ENCODE measurements at regions of chr3 and their contacts with region 1.

Region 1: GRCh38 chr3:158094235-158095110 is 11.7 kb downstream of the SHOX2 start:
- DNase-seq: no peak
- ATAC-seq: no peak
- H3K4me3 ChIP-seq: no peak overlapping the region
- H3K27ac ChIP-seq: no peak overlapping the region
- H3K4me1 ChIP-seq: no peaks in the 10 kb centered on the region
- H3K27me3 ChIP-seq: no peaks in the 10 kb centered on the region
- CTCF ChIP-seq: no peak
- EP300 ChIP-seq: no peak
- POLR2A ChIP-seq: no peak
- RAD21 ChIP-seq: no peak

Region 2: DNA sequence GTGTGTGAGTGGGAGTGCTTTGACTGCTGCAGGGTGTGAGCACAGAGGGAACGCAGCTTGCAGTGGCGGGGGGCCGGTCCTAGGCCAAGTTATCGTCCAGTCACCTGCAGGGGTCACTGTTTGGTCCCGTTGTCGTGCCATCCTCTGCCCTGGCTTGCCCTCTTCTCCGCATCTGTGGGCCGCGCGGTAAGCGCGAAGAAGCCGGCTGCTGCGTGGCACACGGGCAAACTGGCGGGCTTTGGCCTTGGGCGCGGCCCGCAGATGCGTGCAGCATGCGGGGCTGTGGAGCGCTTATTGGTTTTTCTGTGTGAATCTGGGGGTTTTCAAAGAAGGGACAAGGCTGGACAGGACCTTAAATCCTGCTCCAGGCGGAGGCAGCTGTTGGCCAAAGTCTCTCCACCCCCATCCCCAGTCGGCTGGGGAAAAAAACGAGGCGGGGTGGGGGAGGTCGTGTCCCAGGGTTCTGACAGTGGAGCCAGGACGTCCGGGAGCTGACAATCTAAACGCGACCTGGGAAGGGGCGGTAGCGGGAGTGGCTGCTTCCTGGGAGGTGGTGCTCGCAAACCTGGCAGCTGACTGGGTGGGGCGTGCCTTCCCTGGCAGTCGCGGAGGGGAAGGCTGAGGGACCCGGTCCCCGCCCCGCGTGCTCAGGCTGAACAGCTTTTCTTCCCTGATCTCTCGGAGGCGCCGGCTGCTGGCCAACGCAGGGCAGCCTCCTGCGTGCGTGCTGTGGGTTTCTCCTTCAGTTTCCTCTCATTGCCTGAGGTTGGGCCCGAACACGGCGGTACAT is 551.6 kb before region 1 on chr3:
- CTCF ChIA-PET with region 1: no interaction called
- POLR2A ChIA-PET with region 1: no interaction called
- in situ Hi-C with region 1: no loop called
- intact Hi-C with region 1: no loop called
- DNase-seq: no peak
- ATAC-seq: no peak
- H3K4me3 ChIP-seq: no peak overlapping the region
- H3K27ac ChIP-seq: no peak overlapping the region
- H3K4me1 ChIP-seq: no peaks in the 10 kb centered on the region; a peak in 2 of 5 replicates
- H3K27me3 ChIP-seq: no peaks in the 10 kb centered on the region
- CTCF ChIP-seq: no peak
- EP300 ChIP-seq: no peak
- POLR2A ChIP-seq: no peak
- RAD21 ChIP-seq: no peak

Region 3: DNA sequence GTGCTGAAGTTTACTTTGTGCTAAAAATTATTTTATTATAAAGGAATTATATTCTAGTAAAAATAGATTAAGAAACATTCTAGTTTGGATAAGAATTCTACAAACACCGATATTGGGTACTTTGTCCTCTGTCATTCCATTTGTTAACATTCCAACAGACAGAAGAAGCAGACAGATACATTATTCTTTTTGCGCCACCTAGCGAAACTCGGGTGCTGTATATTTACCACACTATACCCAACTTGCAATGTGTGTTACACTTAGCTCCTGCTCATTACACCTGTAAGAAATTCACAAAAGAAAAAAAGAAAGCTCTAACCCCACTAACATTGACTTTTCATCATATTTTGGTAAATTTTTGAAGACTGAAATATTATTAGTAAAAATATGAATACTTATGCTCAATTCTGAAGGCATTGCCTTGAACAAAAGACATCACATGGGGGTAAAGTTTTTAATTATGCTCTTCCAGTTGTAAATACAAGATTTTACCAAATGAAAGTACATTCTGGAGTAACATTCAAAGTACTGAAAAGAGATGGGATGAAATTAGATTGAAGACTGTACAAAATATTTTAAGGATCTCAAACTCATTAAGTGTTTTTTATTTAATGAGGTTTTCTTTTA is 340.1 kb after region 1 on chr3:
- CTCF ChIA-PET with region 1: no interaction called
- POLR2A ChIA-PET with region 1: no interaction called
- in situ Hi-C with region 1: no loop called
- intact Hi-C with region 1: loop called (anchors 1 kb)
- DNase-seq: peak; percentile 11 to 80 (median 24)
- ATAC-seq: peak; percentile 98
- H3K4me3 ChIP-seq: no peak overlapping the region
- H3K27ac ChIP-seq: no peak overlapping the region
- H3K4me1 ChIP-seq: no peaks in the 10 kb centered on the region
- H3K27me3 ChIP-seq: no peaks in the 10 kb centered on the region
- CTCF ChIP-seq: peak; percentile 55 to 85 (median 67)
- EP300 ChIP-seq: no peak
- POLR2A ChIP-seq: no peak
- RAD21 ChIP-seq: peak; percentile 87 to 91

Region 4: DNA sequence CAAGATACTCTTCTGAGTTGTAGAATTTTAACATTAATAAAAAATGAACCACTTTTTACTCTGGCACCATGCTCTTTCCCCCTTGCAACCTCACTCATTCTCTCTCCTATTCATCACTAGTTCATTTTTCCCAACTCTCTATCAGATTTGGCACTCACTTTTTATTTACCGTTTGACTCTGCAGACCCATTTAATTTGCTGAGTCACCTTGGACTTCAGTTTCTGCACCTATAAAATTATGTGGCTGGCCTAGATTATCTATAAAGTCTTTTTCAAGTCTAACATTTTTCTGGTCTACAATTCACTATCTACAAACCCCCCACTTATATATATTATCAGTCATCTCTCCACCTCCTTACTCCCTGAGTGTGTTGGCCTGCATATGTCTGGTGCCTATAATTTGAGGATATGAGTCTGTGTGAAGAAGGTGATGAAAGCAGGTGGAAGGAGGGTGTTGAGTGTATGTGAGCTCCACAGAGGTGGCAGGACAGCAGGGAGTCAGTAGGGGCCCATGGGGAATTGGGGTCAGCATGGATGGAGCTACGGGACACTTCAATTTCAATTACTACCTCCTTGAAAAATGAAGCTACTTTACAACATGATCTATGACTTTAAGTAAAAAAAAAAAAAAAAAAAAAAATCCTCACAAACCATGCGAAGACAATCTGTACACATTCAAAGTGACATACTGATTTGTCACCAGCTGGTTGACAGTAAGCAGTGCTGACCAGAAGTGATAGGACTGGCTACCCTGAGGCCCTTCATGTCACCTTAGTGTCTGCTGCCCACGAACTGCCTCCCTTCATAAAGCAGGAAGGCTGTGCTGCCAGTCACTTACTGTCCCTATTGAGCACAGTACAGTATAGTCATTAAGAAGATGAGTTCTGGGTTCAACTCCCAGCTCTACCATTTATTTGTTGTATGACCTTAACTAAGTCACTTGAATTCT is 1560.0 kb after region 1 on chr3:
- CTCF ChIA-PET with region 1: no interaction called
- POLR2A ChIA-PET with region 1: no interaction called
- in situ Hi-C with region 1: no loop called
- intact Hi-C with region 1: no loop called
- DNase-seq: no peak
- ATAC-seq: no peak
- H3K4me3 ChIP-seq: no peak overlapping the region
- H3K27ac ChIP-seq: no peak overlapping the region
- H3K4me1 ChIP-seq: no peaks in the 10 kb centered on the region
- H3K27me3 ChIP-seq: no peaks in the 10 kb centered on the region
- CTCF ChIP-seq: no peak
- EP300 ChIP-seq: no peak
- POLR2A ChIP-seq: no peak
- RAD21 ChIP-seq: no peak